ENCODE measurements at regions of chr6 and their contacts with region 1.

Region 1: GRCh38 chr6:130282234-130282995 is 59.7 kb upstream of the SAMD3 start:
- DNase-seq: peak; percentile 31
- CTCF ChIP-seq: peak; percentile 19

Region 2: DNA sequence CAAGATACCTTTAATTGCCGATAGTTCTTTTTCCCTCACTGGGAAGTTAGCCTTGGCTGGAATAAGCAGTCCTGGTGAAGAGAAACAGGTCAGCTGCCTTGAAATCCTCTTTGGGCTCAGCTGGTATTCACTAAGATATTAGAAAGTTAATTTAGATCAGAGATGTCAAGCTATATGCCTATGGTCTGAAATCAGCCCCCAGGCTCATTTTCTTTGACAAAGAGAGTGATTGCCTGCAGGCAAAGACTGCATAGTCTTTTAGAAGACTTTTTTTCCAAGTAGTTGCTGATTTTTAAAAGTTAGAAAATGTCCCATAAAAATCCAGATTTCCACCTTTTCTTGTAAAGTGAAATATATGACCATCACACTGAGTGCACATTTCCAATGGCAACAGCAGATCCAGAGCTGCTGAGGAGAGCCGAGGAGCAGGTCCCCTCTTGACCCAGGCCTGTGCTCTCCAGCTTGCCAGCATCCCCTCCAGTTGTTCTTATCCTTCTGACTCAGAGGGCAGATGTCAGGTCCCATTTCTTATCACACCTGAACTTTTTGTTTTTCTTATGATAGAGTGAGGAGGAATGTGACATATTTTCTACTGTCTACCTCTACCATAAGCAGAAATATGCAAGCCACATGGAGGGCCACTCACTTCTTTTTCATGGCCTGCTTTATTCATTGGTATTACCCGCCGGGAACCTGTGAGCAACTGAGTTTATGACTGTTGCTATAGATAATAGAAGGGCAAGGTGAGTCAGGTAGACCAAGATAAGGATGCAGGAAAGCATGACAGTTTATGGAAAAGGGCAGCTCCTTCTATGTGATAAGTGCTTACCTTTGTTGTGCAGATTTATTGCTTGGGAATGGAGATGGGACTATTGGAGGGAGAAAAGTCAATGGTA is 281.6 kb before region 1 on chr6:
- CTCF ChIA-PET with region 1: no interaction called
- POLR2A ChIA-PET with region 1: no interaction called
- DNase-seq: no peak
- CTCF ChIP-seq: no peak

Region 3: GRCh38 chr6:130202782-130203181 is 79.6 kb before region 1 on chr6:
- CTCF ChIA-PET with region 1: no interaction called
- POLR2A ChIA-PET with region 1: no interaction called
- DNase-seq: peak; percentile 27
- CTCF ChIP-seq: no peak

Region 4: GRCh38 chr6:130293800-130294199 is 11.4 kb after region 1 on chr6:
- CTCF ChIA-PET with region 1: interaction called, 15 read pairs
- POLR2A ChIA-PET with region 1: no interaction called
- DNase-seq: peak; percentile 53
- CTCF ChIP-seq: peak; percentile 59